ENCODE measurements at regions of chr10 and their contacts with region 1.

Region 1: DNA sequence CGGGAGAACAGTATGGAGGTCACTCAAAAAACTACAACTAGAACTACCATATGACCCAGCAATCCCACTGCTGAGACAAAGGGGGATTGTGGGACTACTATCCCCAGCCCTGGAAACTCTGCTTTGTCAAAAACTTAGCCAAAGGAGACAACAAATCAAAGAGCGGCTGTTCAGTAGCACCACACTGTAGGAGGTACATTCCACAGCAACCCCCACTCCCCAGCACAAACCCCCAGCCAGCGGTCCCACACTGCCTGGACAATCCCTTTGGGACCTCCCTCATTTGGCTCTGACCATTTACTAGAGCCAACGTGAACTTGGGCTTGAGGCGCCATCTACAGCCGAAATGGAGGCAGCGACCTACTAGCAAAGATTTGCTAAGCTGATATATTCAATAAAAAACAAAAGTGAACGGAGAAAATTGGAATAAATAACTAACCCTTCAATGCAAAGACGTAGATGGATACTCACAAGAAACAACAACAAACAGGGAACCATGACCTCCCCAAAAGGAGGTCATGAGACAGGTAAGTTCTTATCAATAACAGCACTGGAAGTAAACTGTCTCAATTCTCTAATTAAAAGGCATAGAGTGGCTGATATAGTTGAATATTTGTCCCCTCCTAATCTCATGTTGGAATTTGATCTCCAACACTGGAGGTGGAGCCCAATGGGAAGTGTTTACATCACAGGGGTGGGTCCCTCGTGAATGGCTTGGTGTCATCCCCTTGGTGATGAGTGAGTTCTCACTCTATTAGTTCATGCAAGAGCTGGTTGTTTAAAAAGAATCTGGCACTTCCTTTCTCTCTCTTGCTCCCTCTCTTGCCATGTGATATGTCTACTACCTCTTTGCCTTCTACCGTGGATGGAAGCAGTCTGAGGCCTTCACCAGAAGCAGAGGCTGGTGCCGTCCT is 119.0 kb upstream of the KCNMA1 start:
- DNase-seq: peak; percentile 78
- H3K4me3 ChIP-seq: no peak overlapping the region
- H3K27ac ChIP-seq: no peak overlapping the region
- H3K4me1 ChIP-seq: peaks cover 3% of the 10 kb centered on the region
- H3K27me3 ChIP-seq: no peaks in the 10 kb centered on the region
- CTCF ChIP-seq: peak; percentile 78 to 84
- POLR2A ChIP-seq: no peak

Region 2: DNA sequence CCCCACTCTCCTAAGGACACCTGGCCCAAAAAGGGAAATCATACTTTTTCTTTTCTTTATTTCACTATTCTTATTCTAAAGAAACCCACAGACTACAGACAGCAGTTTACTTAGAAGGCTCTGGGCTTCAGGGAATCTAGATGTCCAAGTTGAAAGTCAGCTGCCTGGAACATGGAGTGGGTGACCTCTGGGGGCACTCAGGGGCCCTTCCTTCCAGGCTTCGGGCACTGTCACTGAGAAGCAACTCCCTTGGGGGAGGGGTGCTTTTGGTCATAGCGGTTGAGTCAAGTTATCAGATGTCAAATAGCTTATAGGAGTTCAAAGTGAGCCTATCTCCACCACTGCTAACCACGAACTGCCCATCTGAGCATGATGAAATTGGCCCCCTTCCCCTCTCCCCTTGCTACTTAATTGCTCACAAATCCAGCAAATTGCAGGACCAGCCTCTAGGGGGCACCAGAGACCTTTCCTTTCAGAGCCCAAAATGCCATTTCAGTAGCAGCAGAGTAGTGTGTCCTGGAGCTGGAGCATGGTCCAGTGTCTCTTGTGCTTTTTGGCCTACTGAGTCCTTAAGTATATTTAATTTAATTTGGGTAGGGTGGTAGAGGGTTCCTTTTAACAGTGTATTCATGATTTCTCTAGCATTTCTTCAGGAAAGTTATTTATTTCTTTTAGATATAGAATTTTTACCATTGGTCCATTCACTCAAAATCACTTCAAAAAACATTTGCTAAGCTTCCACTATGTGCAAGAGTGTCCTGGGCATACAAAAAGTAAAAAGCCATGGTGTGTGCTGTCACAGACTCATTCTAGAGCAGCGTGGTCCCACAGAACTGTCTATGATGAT is 582.7 kb before region 1 on chr10:
- CTCF ChIA-PET with region 1: interaction called, 16 read pairs
- POLR2A ChIA-PET with region 1: no interaction called
- dilution Hi-C with region 1: no loop called
- intact Hi-C with region 1: loop called (anchors 1 kb)
- DNase-seq: peak; percentile 75
- H3K4me3 ChIP-seq: no peak overlapping the region
- H3K27ac ChIP-seq: no peak overlapping the region
- H3K4me1 ChIP-seq: peaks cover under 1% of the 10 kb centered on the region
- H3K27me3 ChIP-seq: no peaks in the 10 kb centered on the region
- CTCF ChIP-seq: peak; percentile 86 to 90
- POLR2A ChIP-seq: no peak

Region 3: GRCh38 chr10:77531441-77532001 is 225.1 kb before region 1 on chr10:
- CTCF ChIA-PET with region 1: no interaction called
- POLR2A ChIA-PET with region 1: no interaction called
- dilution Hi-C with region 1: no loop called
- intact Hi-C with region 1: no loop called
- DNase-seq: peak; percentile 58
- H3K4me3 ChIP-seq: no peak overlapping the region
- H3K27ac ChIP-seq: no peak overlapping the region
- H3K4me1 ChIP-seq: peaks cover 6% of the 10 kb centered on the region
- H3K27me3 ChIP-seq: no peaks in the 10 kb centered on the region
- CTCF ChIP-seq: no peak
- POLR2A ChIP-seq: no peak

Region 4: DNA sequence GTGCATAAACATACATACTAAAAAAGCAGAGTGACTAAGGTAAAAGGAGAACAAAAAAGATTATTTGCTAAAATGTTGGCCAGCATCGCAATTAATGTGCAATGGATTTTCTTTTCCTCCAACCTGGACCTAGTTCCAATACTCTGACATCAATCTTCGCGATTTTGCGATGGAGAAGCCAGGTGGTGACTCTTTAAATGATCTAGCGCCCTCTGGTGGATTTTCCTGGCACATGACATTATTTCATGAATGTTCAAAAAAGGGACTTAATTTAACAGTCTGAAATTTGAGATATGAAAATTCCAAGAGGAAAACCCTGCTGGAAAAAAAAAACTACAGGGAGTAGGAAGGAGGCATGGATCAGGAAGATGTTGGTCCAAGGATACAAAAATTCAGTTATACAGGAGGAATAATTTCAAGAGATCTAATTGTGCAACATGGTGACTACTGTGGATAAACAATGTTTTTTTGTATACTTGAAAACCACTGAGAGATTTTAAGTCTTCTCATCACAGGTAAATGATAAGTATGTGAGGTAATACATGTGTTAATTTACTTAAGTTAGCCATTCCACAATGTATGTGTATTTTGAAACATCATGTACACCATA is 114.7 kb before region 1 on chr10:
- CTCF ChIA-PET with region 1: interaction called, 27 read pairs
- POLR2A ChIA-PET with region 1: no interaction called
- dilution Hi-C with region 1: no loop called
- intact Hi-C with region 1: loop called (anchors 1 kb)
- DNase-seq: peak; percentile 78
- H3K4me3 ChIP-seq: no peak overlapping the region
- H3K27ac ChIP-seq: no peak overlapping the region
- H3K4me1 ChIP-seq: no peaks in the 10 kb centered on the region
- H3K27me3 ChIP-seq: peaks cover 22 to 27% of the 10 kb centered on the region in 2 experiments
- CTCF ChIP-seq: peak; percentile 45 to 61
- POLR2A ChIP-seq: no peak

Region 5: DNA sequence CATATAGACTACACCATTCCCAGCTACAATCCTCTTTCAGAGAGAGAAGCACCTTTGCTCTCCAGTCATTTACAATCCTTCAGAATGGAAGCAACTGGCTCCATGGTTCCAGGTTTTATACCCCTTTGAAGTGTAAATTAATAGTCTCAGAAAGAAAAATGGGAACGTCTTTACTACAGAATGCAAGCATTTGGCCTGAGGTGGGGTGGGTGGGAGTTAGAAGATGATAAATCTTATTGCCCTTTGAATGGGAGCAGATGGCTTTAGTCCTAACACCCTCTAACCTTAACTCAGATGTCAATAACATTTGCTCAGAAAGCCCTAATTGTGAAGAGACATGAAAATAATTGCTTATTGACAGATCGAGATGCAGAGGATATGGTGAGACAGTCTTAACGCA is 34.8 kb before region 1 on chr10:
- CTCF ChIA-PET with region 1: interaction called, 317 read pairs
- POLR2A ChIA-PET with region 1: no interaction called
- dilution Hi-C with region 1: no loop called
- intact Hi-C with region 1: loop called (anchors 1 kb)
- DNase-seq: no peak
- H3K4me3 ChIP-seq: no peak overlapping the region
- H3K27ac ChIP-seq: no peak overlapping the region
- H3K4me1 ChIP-seq: peaks cover 5% of the 10 kb centered on the region
- H3K27me3 ChIP-seq: no peaks in the 10 kb centered on the region
- CTCF ChIP-seq: no peak
- POLR2A ChIP-seq: no peak

Region 6: GRCh38 chr10:77746047-77746707 is 10.4 kb before region 1 on chr10:
- CTCF ChIA-PET with region 1: interaction called, 27 read pairs
- POLR2A ChIA-PET with region 1: no interaction called
- dilution Hi-C with region 1: no loop called
- intact Hi-C with region 1: no loop called
- DNase-seq: no peak
- H3K4me3 ChIP-seq: no peak overlapping the region
- H3K27ac ChIP-seq: no peak overlapping the region
- H3K4me1 ChIP-seq: no peaks in the 10 kb centered on the region
- H3K27me3 ChIP-seq: no peaks in the 10 kb centered on the region
- CTCF ChIP-seq: no peak
- POLR2A ChIP-seq: no peak

Measured in endothelial cell of umbilical vein (primary cell).